OCI-LY7 (cell line): ENCODE measurements at regions of chr1 and their contacts with region 1.

Region 1: DNA sequence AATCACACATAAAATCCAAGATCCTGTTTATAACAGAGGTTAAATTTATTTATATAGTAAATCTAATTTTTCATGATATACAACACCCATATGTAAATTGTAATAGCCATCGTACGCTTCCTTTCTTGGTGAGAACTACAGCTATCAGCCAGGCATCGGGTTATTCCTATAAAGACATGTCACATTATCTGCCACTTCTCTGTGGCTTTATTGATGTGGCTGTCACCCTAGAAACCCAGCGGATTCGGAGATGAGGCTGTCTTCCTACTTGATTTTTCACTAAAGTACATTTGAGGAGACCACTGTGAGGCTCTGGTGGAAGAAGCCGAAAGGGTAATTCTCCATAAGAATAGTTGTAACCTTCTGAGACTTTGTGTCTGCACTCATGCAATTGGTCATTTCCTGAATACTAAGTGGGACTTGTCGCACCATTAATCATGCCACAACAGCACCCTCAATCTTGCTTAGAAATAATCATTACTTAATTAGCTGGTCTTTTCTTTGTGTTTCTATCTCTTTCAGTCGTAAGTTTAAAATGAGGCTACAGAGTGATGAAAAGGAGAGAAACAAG is 106.0 kb downstream of the NTNG1 start:
- DNase-seq: peak; percentile 37
- H3K4me3 ChIP-seq: peak overlapping the region; percentile 9
- H3K27ac ChIP-seq: peak overlapping the region; percentile 61
- H3K4me1 ChIP-seq: peaks cover 61% of the 10 kb centered on the region
- CTCF ChIP-seq: no peak

Region 2: DNA sequence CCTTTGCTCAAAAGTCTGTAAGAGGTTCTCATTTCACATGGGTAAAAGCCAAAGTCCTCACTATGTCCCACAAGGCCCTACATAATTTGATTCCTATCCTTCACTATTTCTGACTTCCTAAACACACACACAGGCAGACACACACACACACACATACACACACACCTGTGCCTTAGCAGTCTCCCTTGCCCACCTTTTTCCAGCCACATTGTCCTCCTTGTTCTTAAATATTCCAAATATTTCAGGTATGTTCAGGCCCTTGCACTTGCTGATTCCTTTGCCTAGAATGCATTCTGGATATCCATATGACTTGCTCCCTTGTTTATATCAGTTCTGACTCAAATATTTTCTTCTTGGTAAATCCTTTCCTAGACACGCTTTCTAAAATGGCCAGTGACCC is 51.4 kb before region 1 on chr1:
- CTCF ChIA-PET with region 1: no interaction called
- POLR2A ChIA-PET with region 1: no interaction called
- intact Hi-C with region 1: no loop called
- DNase-seq: no peak
- H3K4me3 ChIP-seq: no peak overlapping the region
- H3K27ac ChIP-seq: no peak overlapping the region
- H3K4me1 ChIP-seq: peaks cover 4% of the 10 kb centered on the region
- CTCF ChIP-seq: no peak

Region 3: DNA sequence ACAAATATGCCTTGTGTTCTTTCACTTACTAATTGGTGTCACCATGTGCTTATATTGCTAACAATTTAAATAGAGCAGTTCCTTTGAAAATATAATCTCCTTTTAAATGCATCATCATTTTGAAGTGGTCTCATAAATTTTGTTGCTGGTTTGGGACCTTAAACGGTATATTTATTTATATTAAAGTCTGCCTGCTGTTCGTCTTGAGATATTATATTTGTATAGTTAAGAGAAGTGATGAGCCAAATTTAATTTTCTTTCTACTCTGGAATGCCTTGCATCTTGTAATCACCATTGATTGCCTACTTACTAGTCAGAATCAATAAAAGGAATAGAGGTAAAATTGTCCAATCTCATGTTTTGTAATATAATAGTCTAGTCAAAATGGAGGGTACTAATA is 14.4 kb before region 1 on chr1:
- CTCF ChIA-PET with region 1: no interaction called
- POLR2A ChIA-PET with region 1: interaction called, 17 read pairs
- intact Hi-C with region 1: no loop called
- DNase-seq: no peak
- H3K4me3 ChIP-seq: no peak overlapping the region
- H3K27ac ChIP-seq: no peak overlapping the region
- H3K4me1 ChIP-seq: no peaks in the 10 kb centered on the region
- CTCF ChIP-seq: no peak

Region 4: GRCh38 chr1:107294686-107295085 is 47.8 kb after region 1 on chr1:
- CTCF ChIA-PET with region 1: no interaction called
- POLR2A ChIA-PET with region 1: no interaction called
- intact Hi-C with region 1: no loop called
- DNase-seq: no peak
- H3K4me3 ChIP-seq: no peak overlapping the region
- H3K27ac ChIP-seq: no peak overlapping the region
- H3K4me1 ChIP-seq: no peaks in the 10 kb centered on the region
- CTCF ChIP-seq: no peak